Transverse colon (tissue), 4 donors: ENCODE measurements at regions of chr6 and their contacts with region 1.

Region 1: GRCh38 chr6:29976588-29977424 is 34.5 kb downstream of the HLA-A start:
- DNase-seq: peak; percentile 84
- H3K4me3 ChIP-seq: peak overlapping the region; percentile 22 to 59 (median 50)
- H3K27ac ChIP-seq: peak overlapping the region; percentile 83 to 93 (median 92)
- H3K4me1 ChIP-seq: peaks cover 6 to 29% (median 24%) of the 10 kb centered on the region in 4 donors
- H3K27me3 ChIP-seq: peaks cover 5% of the 10 kb centered on the region
- CTCF ChIP-seq: peak in 4 of 5 experiments; percentile 23 to 65 (median 40)
- EP300 ChIP-seq: no peak
- POLR2A ChIP-seq: peak; percentile 72

Region 2: DNA sequence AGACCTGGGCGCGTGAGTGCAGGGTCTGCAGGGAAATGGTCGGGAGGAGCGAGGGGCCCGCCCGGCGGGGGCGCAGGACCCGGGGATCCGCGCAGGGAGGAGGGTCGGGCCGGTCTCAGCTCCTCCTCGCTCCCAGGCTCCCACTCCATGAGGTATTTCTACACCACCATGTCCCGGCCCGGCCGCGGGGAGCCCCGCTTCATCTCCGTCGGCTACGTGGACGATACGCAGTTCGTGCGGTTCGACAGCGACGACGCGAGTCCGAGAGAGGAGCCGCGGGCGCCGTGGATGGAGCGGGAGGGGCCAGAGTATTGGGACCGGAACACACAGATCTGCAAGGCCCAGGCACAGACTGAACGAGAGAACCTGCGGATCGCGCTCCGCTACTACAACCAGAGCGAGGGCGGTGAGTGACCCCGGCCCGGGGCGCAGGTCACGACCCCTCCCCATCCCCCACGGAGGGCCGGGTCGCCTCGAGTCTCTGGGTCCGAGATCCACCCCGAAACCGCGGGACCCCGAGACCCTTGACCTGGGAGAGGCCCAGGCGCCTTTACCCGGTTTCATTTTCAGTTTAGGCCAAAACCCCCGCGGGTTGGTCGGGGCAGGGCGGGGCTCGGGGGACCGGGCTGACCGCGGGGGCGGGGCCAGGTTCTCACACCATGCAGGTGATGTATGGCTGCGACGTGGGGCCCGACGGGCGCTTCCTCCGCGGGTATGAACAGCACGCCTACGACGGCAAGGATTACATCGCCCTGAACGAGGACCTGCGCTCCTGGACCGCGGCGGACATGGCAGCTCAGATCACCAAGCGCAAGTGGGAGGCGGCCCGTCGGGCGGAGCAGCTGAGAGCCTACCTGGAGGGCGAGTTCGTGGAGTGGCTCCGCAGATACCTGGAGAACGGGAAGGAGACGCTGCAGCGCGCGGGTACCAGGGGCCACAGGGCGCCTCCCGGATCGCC is 88.7 kb before region 1 on chr6:
- in situ Hi-C with region 1: no loop called
- intact Hi-C with region 1: loop called (anchors 5 kb)
- DNase-seq: peak; percentile 94
- H3K4me3 ChIP-seq: peak overlapping the region in 3 of 4 donors; percentile 65 to 92 (median 74)
- H3K27ac ChIP-seq: peak overlapping the region in 3 of 4 donors; percentile 87 to 99 (median 97)
- H3K4me1 ChIP-seq: peaks cover 0 to 4% (median 0%) of the 10 kb centered on the region in 4 donors
- H3K27me3 ChIP-seq: no peaks in the 10 kb centered on the region
- CTCF ChIP-seq: no peak
- EP300 ChIP-seq: no peak
- POLR2A ChIP-seq: peak; percentile 9

Region 3: DNA sequence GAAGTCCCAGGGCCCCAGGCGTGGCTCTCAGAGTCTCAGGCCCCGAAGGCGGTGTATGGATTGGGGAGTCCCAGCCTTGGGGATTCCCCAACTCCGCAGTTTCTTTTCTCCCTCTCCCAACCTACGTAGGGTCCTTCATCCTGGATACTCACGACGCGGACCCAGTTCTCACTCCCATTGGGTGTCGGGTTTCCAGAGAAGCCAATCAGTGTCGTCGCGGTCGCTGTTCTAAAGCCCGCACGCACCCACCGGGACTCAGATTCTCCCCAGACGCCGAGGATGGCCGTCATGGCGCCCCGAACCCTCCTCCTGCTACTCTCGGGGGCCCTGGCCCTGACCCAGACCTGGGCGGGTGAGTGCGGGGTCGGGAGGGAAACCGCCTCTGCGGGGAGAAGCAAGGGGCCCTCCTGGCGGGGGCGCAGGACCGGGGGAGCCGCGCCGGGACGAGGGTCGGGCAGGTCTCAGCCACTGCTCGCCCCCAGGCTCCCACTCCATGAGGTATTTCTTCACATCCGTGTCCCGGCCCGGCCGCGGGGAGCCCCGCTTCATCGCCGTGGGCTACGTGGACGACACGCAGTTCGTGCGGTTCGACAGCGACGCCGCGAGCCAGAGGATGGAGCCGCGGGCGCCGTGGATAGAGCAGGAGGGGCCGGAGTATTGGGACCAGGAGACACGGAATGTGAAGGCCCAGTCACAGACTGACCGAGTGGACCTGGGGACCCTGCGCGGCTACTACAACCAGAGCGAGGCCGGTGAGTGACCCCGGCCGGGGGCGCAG is 34.3 kb before region 1 on chr6 and contains the start of gene HLA-A:
- in situ Hi-C with region 1: no loop called
- intact Hi-C with region 1: loop called (anchors 2 kb)
- DNase-seq: peak; percentile 96
- H3K4me3 ChIP-seq: peak within 1 kb of the TSS; percentile 46 to 79 (median 72)
- H3K27ac ChIP-seq: peak within 1 kb of the TSS; percentile 83 to 95 (median 94)
- H3K4me1 ChIP-seq: peaks cover 0 to 25% (median 5%) of the 10 kb centered on the region in 4 donors
- H3K27me3 ChIP-seq: no peaks in the 10 kb centered on the region
- CTCF ChIP-seq: peak in 1 of 5 experiments; percentile 9
- EP300 ChIP-seq: no peak
- POLR2A ChIP-seq: peak; percentile 96
- total RNA-seq, gene HLA-A: 733 to 1,932 (median 1,470) TPM

Region 4: DNA sequence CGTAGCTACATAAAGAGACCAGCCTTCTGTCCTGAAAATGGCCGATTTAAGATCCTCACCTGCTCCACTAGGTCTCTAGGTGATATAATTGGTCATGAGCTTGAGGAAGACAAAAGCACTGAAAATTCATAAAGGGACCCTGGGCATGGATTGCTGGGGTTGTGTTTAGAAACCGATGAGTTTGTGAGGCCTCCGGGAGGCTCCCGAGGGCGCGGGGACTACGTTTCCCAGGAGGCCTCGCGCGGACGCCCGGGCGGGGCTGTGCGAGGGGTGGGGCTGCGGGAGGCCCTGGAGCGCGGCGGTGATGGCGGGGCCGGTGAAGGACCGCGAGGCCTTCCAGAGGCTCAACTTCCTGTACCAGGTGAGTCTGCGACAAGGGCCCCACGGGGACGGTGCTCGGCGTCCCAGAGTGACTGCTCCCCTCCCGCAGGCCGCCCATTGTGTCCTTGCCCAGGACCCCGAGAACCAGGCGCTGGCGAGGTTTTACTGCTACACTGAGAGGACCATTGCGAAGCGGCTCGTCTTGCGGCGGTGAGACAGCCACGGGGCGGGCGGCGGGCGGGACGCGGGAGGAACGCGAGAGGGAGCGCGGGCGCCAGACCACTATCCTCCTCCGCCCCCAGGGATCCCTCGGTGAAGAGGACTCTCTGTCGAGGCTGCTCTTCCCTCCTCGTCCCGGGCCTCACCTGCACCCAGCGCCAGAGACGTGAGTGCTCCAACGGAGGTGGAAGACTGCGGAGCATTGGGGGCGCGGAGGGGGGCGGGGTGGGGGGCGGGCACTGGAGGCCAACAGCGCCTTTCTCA is 368.3 kb after region 1 on chr6 and contains the start of gene RPP21:
- in situ Hi-C with region 1: no loop called
- intact Hi-C with region 1: no loop called
- DNase-seq: peak; percentile 91
- H3K4me3 ChIP-seq: peak within 1 kb of the TSS; percentile 69 to 88 (median 76)
- H3K27ac ChIP-seq: peak within 1 kb of the TSS; percentile 85 to 96 (median 92)
- H3K4me1 ChIP-seq: peaks cover 4 to 13% (median 8%) of the 10 kb centered on the region in 4 donors
- H3K27me3 ChIP-seq: no peaks in the 10 kb centered on the region
- CTCF ChIP-seq: peak in 1 of 5 experiments; percentile 8
- EP300 ChIP-seq: no peak
- POLR2A ChIP-seq: peak; percentile 88
- total RNA-seq, gene RPP21: 61.9 to 246 (median 87.5) TPM